ENCODE measurements at regions of chr2 and their contacts with region 1.

Region 1: GRCh38 chr2:1769703-1770422 is 25.5 kb upstream of the PXDN start:
- DNase-seq: no peak
- H3K4me3 ChIP-seq: no peak overlapping the region
- CTCF ChIP-seq: peak; percentile 77

Region 2: GRCh38 chr2:1758774-1759610 is 10.9 kb before region 1 on chr2:
- CTCF ChIA-PET with region 1: interaction called, 110 read pairs
- POLR2A ChIA-PET with region 1: interaction called, 3 read pairs
- DNase-seq: no peak
- H3K4me3 ChIP-seq: no peak overlapping the region
- CTCF ChIP-seq: no peak

Region 3: DNA sequence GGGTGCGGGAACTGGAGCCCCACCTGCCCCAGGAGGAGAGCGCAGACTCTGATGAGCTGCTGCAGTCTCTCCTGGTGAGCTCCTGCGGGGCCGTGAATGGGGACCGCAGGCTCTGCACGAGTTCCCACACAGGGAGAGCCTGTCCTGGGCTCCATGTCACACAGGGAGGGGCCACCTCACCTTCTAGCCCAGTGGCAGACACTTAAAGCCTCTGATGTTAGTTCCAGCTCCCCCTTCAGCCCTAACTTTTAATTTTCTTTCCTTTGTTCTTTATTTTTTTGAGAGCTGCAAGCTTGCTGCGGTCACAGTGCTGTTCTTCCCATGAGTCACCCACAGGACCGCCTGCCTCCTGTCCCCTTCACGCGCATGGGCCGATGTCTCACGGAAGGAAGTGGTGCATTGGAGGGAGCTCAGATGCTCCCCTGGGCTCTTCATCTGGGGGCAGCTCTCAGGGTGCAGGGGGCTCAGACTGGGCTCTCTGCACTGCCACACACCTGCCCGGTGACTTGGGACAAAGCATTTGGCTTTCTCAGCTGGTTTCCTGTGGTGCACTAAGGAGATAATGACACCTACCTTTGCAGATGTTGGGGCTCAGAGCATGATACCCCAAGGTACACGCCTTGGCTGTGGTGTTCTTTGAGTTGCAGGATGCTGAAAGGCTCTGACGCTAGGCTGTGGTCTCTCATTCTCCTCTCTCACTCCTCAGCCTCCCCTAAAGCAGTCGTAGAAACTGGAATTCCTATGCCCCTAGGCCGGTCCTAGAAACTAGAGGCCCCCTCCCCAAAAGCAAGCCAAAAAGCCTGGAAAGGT is 11.6 kb after region 1 on chr2:
- CTCF ChIA-PET with region 1: interaction called, 28 read pairs
- POLR2A ChIA-PET with region 1: no interaction called
- DNase-seq: no peak
- H3K4me3 ChIP-seq: no peak overlapping the region
- CTCF ChIP-seq: no peak

Region 4: DNA sequence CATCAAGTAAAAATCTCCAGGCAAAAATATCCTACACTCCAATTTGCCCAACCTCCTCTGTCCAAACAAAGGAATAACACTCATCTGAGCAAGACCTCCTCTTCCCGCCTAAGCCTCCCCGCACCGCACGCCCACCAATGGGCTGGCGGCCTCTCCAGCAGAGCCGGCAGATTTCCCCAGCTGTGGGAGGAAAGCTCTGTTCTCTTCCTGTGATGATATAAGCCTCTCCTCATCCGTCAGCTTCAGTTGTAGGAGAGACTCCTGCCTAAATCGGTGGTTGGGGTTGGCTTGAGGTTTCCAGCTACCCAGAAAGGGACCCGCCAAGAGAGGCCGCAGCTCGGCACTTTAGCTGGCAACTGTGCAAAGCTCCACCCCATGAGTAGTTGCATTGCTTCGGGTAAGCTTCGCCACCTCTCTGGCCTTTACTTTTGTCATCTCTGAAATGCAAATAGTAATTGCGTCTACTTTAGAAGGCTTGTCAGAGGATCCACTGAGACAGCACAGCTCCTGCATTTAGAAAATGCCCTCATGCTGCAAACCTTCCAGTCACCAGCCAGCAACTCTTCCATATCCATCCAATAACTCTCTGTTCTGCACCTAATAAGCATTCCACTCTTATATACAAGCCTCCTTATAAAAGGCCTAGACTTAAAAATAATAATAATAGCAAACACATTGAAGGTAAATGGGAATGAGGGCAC is 414.8 kb after region 1 on chr2:
- CTCF ChIA-PET with region 1: no interaction called
- POLR2A ChIA-PET with region 1: no interaction called
- DNase-seq: no peak
- H3K4me3 ChIP-seq: no peak overlapping the region
- CTCF ChIP-seq: no peak